ENCODE measurements at regions of chr17 and their contacts with region 1.

Region 1: GRCh38 chr17:58082870-58083490 is at the start of gene DYNLL2:
- DNase-seq: peak; percentile 85 to 92
- ATAC-seq: peak; percentile 71 to 82
- H3K4me3 ChIP-seq: peak within 1 kb of the TSS; percentile 78 to 98 (median 92)
- H3K27ac ChIP-seq: peak within 1 kb of the TSS; percentile 91 to 100 (median 98)
- H3K4me1 ChIP-seq: peaks cover 38 to 41% of the 10 kb centered on the region in 2 donors
- H3K27me3 ChIP-seq: no peaks in the 10 kb centered on the region
- CTCF ChIP-seq: no peak
- POLR2A ChIP-seq: no peak
- total RNA-seq, gene DYNLL2: 14.5 to 28.8 (median 20.4) TPM

Region 2: GRCh38 chr17:57084802-57085447 is 998.1 kb before region 1 on chr17 and contains the start of gene AKAP1:
- in situ Hi-C with region 1: no loop called
- intact Hi-C with region 1: loop called (anchors 5 kb)
- DNase-seq: peak; percentile 90 to 95
- ATAC-seq: peak; percentile 77 to 78
- H3K4me3 ChIP-seq: peak within 1 kb of the TSS; percentile 75 to 95 (median 82)
- H3K27ac ChIP-seq: peak within 1 kb of the TSS; percentile 91 to 99 (median 94)
- H3K4me1 ChIP-seq: peaks cover 41% of the 10 kb centered on the region in 2 donors
- H3K27me3 ChIP-seq: no peaks in the 10 kb centered on the region
- CTCF ChIP-seq: peak in 4 of 5 experiments; percentile 24 to 50 (median 32)
- POLR2A ChIP-seq: peak; percentile 96 to 98
- total RNA-seq, gene AKAP1: 57.5 to 174 (median 117) TPM

Region 3: GRCh38 chr17:57255776-57256681 is 827.0 kb before region 1 on chr17 and contains the start of gene MSI2:
- in situ Hi-C with region 1: no loop called
- intact Hi-C with region 1: loop called (anchors 10 kb)
- DNase-seq: peak; percentile 94 to 95
- ATAC-seq: peak; percentile 80 to 83
- H3K4me3 ChIP-seq: peak within 1 kb of the TSS; percentile 55 to 92 (median 75)
- H3K27ac ChIP-seq: peak within 1 kb of the TSS; percentile 86 to 98 (median 96)
- H3K4me1 ChIP-seq: peaks cover 19 to 32% of the 10 kb centered on the region in 2 donors
- H3K27me3 ChIP-seq: no peaks in the 10 kb centered on the region
- CTCF ChIP-seq: no peak
- POLR2A ChIP-seq: peak; percentile 65 to 76
- total RNA-seq, gene MSI2: 33.1 to 66.2 (median 48.5) TPM

Region 4: DNA sequence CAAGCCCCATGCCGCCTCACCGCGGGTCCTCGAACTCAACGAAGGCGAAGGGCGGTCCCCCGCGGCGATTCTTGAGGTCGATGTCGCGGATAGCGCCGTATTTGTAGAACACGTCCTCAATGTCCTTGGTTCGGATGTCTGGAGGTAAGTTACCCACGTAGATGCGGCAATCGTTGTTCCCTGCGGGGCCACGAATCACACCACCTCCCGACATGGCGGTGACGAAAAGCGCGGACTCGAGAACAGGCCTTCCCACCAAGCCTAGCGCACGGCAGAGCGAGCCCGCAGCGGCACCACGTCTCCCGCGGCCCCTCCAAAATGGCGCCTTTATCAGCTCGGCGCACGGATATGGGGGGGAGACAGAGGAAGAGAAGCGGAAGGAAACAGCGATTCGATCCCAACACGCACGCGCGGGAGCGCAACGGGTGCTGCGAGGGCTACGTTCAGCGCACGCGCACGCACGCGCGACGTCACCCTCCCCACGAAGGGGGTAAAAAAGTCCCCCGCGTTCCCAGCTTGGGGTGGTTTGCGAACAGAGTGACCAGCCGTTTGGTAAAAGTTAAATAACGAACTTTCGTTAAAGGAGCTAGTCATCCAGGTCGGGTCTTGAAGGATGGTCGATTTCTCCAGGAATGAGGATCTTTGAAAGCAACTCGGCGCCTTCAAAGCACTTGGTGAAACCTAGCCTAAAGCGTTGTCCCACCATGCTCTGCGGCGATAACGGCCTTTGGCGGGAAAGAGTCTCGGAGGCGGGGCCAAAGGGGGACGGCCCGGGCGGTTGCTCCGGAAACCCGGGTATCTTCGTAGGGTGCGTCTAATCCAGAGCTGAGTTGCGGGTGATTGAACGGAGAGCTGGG is 75.8 kb before region 1 on chr17 and contains the start of gene SRSF1:
- in situ Hi-C with region 1: loop called in 1 of 4 experiments (anchors 10 kb)
- intact Hi-C with region 1: loop called (anchors 1 kb)
- DNase-seq: peak; percentile 95 to 96
- ATAC-seq: peak; percentile 90 to 93
- H3K4me3 ChIP-seq: peak within 1 kb of the TSS; percentile 91 to 98 (median 97)
- H3K27ac ChIP-seq: peak within 1 kb of the TSS; percentile 96 to 100 (median 100)
- H3K4me1 ChIP-seq: peaks cover 47 to 48% of the 10 kb centered on the region in 2 donors
- H3K27me3 ChIP-seq: no peaks in the 10 kb centered on the region
- CTCF ChIP-seq: peak in 1 of 5 experiments; percentile 25
- POLR2A ChIP-seq: peak; percentile 97 to 98
- total RNA-seq, gene SRSF1: 69.4 to 85.4 (median 82.2) TPM

Region 5: DNA sequence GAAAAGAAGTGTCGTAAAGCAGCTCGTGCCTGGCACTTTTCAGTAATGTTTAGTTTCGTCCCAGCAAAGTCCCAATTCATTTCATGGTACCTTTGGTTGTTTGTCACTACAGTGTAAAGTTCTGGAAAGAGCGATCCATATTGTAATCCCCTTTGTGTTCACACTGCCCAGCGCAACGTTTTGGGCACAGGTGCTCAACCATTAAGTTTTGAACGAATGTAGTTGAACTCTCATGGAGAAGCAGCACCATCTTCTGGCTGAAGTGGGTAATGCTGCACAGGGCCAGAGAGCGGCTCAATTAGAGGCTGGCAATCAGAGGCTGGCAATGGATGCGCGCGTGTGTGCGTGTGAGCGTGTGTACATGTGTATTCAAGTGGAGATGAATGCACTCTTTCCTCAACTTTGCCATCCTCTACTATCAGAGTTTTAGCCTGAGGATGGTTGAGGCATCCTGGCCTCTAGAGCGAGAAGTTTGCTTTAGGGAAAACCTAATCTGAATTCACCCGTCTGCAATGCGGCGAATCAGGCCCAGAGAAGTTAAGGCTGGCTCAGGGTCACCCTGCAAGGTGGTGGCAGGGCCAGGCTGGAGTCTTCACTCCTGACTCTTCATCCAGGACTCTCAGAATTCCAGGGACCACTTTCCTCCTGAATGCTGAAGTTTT is 30.1 kb after region 1 on chr17:
- in situ Hi-C with region 1: no loop called
- intact Hi-C with region 1: loop called (anchors 2 kb)
- DNase-seq: peak; percentile 40 to 62
- ATAC-seq: peak; percentile 90 to 94
- H3K4me3 ChIP-seq: no peak overlapping the region
- H3K27ac ChIP-seq: no peak overlapping the region
- H3K4me1 ChIP-seq: peaks cover 0 to 3% of the 10 kb centered on the region in 2 donors
- H3K27me3 ChIP-seq: no peaks in the 10 kb centered on the region
- CTCF ChIP-seq: peak; percentile 86 to 97 (median 92)
- POLR2A ChIP-seq: no peak

Region 6: DNA sequence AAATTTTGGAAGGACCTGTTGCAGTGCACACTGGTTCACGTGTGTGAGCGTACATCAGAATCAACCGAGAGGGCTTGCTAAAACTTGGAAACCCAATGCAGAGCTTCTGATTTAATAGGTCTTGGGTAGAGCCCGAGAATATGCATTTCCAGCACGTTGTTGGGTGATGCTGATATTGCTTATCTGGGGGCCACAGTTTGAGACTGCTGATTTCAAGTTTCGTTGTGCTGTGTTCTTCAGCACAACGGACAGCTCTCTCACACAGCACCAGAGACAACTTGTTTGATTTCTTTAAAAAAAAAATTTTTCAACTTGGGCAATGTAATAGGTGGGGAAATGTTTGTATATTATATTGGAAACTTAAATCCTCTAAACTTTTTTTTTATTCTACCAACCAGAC is 93.2 kb after region 1 on chr17:
- in situ Hi-C with region 1: no loop called
- intact Hi-C with region 1: no loop called
- DNase-seq: no peak
- ATAC-seq: no peak
- H3K4me3 ChIP-seq: no peak overlapping the region
- H3K27ac ChIP-seq: no peak overlapping the region
- H3K4me1 ChIP-seq: no peaks in the 10 kb centered on the region
- H3K27me3 ChIP-seq: no peaks in the 10 kb centered on the region
- CTCF ChIP-seq: no peak
- POLR2A ChIP-seq: no peak

Region 7: DNA sequence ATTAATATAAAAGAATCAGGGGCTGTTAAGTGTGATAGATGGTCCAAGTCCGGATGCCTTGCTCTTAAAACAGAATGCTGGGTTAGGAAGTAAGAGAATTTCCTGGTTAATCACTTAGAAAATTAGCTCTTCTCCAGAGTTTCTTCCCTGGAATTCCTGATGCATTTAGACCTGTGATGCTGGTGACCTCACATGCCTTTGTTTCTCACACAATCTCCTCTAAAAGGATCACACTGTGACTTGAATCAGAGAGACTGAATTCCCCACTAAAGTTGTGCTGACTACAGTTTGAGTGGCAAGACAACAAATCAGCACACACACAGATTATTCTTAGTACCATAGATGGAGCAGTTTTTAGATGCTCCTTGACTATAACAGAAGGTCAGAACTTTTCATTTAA is 338.7 kb after region 1 on chr17:
- in situ Hi-C with region 1: no loop called
- intact Hi-C with region 1: no loop called
- DNase-seq: no peak
- ATAC-seq: no peak
- H3K4me3 ChIP-seq: no peak overlapping the region
- H3K27ac ChIP-seq: no peak overlapping the region
- H3K4me1 ChIP-seq: peaks cover 0 to 10% of the 10 kb centered on the region in 2 donors
- H3K27me3 ChIP-seq: no peaks in the 10 kb centered on the region
- CTCF ChIP-seq: no peak
- POLR2A ChIP-seq: no peak

Measured in gastrocnemius medialis (tissue), 4 donors.